ENCODE measurements at regions of chr7 and their contacts with region 1.

Region 1: DNA sequence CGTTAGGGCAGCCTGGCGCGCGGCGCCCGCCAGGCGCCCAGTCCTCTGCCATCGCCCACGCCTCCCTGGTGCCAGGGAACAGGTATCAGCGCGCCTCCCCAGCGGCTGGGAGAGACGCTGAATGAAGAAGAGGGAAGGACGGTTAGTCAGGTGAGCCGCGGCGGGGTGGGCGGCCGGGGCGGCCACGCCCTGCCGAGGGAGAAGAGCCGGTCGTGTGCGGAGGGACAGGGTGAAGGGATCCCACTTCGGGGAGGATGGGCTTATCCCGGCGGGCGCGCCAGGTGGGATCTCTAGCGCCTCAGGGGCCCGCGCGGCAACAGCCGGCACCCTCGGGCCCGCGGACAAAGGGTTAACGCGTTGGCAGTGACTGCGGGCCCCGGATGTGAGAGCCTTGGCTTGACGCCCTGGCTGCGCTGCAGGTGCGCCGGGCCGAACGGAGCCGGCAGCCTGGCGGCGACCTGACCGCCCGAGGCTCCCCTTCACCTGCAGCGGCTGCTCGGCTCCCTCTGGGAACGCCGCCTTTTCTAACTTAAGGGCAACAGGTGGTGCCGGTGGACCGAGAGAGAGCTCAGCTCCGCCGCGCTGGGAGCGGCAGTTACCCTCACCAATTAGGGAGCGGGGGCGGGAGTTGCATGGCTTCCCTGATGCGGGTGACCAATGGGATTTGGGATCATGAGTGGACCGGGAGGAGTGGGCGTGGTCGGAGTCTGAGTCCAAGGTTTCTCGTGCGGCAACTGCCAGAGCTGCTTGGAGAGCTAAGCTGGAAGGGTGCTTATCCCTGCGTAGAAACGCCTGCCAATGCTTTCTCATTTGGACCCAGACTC is at the start of gene ARL4A:
- DNase-seq: peak; percentile 98 to 100 (median 99)
- ATAC-seq: peak; percentile 96 to 98 (median 98)
- H3K4me3 ChIP-seq: peak within 1 kb of the TSS; percentile 67 to 97 (median 87)
- H3K27ac ChIP-seq: peak within 1 kb of the TSS; percentile 49 to 93 (median 88)
- H3K4me1 ChIP-seq: peaks cover 0 to 21% (median 12%) of the 10 kb centered on the region in 12 donors
- H3K27me3 ChIP-seq: no peaks in the 10 kb centered on the region
- CTCF ChIP-seq: peak in 11 of 12 donors; percentile 9 to 68 (median 48)
- POLR2A ChIP-seq: peak; percentile 76 to 92
- total RNA-seq, gene ARL4A: 12.8 to 21.4 (median 14.5) TPM

Region 2: GRCh38 chr7:12623897-12624498 is 63.1 kb before region 1 on chr7:
- intact Hi-C with region 1: no loop called
- DNase-seq: no peak
- ATAC-seq: no peak
- H3K4me3 ChIP-seq: no peak overlapping the region
- H3K27ac ChIP-seq: no peak overlapping the region
- H3K4me1 ChIP-seq: peaks cover 0 to 4% (median 0%) of the 10 kb centered on the region in 12 donors
- H3K27me3 ChIP-seq: no peaks in the 10 kb centered on the region
- CTCF ChIP-seq: peak; percentile 50 to 74 (median 70)
- POLR2A ChIP-seq: no peak

Region 3: GRCh38 chr7:12647364-12648219 is 39.5 kb before region 1 on chr7:
- intact Hi-C with region 1: loop called in 1 of 10 experiments (anchors 5 kb)
- DNase-seq: no peak
- ATAC-seq: no peak
- H3K4me3 ChIP-seq: no peak overlapping the region
- H3K27ac ChIP-seq: no peak overlapping the region
- H3K4me1 ChIP-seq: no peaks in the 10 kb centered on the region
- H3K27me3 ChIP-seq: no peaks in the 10 kb centered on the region
- CTCF ChIP-seq: no peak
- POLR2A ChIP-seq: no peak

Region 4: DNA sequence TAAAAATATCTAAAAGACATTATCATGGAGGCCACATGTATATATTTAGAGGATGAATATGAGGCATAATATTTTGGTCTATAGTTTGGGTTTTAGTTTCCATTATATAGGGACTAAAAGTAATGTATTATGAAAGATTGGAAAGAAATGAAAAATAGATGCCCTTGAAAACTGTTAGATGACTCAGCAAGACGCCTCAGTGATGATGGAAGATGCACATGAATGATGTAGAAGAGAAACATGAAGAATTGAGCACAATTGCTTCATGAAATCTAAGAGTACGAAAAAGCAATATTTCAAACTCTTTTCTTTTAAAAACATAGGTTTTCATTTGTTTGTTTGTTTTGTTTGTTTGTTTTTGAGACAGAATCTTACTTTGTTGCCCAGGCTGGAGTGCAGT is 90.2 kb after region 1 on chr7:
- intact Hi-C with region 1: loop called in 5 of 10 experiments (anchors 5 to 10 kb)
- DNase-seq: no peak
- ATAC-seq: no peak
- H3K4me3 ChIP-seq: no peak overlapping the region
- H3K27ac ChIP-seq: no peak overlapping the region
- H3K4me1 ChIP-seq: no peaks in the 10 kb centered on the region
- H3K27me3 ChIP-seq: no peaks in the 10 kb centered on the region
- CTCF ChIP-seq: no peak
- POLR2A ChIP-seq: no peak

Region 5: DNA sequence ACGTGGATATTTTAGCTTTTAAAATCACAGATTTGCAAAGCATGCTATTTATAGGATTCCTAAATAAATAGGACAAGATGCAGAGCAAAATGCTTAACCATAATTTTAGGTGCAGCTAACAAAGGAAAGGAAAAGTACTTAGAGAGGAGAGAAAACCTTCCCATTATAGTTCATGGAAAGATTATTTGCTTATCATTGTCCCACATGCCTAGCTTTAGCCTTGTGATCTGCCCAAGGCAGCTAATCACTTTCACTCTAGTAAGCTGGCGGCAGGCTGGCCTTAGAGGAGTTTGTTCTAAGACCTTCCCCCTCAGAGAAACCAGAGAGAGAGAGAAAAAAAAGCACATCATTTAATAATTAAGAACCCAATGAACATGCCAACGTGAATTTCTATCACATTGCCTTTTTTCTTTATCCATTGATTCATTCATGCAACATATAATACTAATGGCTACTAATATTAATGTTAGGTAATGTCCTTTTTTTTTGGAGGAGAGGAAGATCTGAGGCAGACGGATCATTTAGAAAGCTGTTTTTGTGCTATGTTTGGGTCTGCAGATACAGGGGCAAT is 274.9 kb after region 1 on chr7:
- intact Hi-C with region 1: loop called in 1 of 10 experiments (anchors 10 kb)
- DNase-seq: peak in 1 of 5 donors; percentile 53
- ATAC-seq: peak in 3 of 4 donors; percentile 68 to 78 (median 76)
- H3K4me3 ChIP-seq: no peak overlapping the region
- H3K27ac ChIP-seq: peak overlapping the region in 3 of 12 donors; percentile 23 to 50 (median 47)
- H3K4me1 ChIP-seq: peaks cover 0 to 4% (median 0%) of the 10 kb centered on the region in 12 donors
- H3K27me3 ChIP-seq: no peaks in the 10 kb centered on the region
- CTCF ChIP-seq: no peak
- POLR2A ChIP-seq: no peak

Region 6: GRCh38 chr7:13077466-13077865 is 390.4 kb after region 1 on chr7:
- intact Hi-C with region 1: loop called in 1 of 10 experiments (anchors 10 kb)
- DNase-seq: no peak
- ATAC-seq: no peak
- H3K4me3 ChIP-seq: no peak overlapping the region
- H3K27ac ChIP-seq: no peak overlapping the region
- H3K4me1 ChIP-seq: no peaks in the 10 kb centered on the region
- H3K27me3 ChIP-seq: no peaks in the 10 kb centered on the region
- CTCF ChIP-seq: no peak
- POLR2A ChIP-seq: no peak

Region 7: DNA sequence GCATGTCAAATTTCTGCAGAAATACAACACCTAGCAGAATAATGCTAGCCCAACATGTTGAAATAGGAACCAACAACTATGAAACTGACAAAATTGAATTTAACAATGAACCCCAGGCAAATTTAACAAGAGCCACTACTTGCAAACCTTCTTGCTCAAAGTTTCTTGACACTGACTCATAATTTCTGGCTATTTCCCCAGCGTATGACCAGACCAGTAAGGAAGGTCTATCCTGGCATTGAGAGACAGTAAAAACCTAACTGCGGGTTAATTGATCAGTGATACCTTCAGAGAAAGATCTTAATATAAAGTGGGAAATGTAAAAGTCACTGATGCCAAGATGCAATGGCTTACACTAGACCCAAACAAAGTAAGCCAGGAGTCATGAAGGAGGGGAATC is 510.4 kb after region 1 on chr7:
- intact Hi-C with region 1: loop called in 1 of 10 experiments (anchors 10 kb)
- DNase-seq: no peak
- ATAC-seq: no peak
- H3K4me3 ChIP-seq: no peak overlapping the region
- H3K27ac ChIP-seq: no peak overlapping the region
- H3K4me1 ChIP-seq: peaks cover 0 to 3% (median 0%) of the 10 kb centered on the region in 12 donors
- H3K27me3 ChIP-seq: no peaks in the 10 kb centered on the region
- CTCF ChIP-seq: no peak
- POLR2A ChIP-seq: no peak